Activated CD4-positive, alpha-beta T cell treated with anti-CD3 and anti-CD28 coated beads, Interleukin-2, amount 10 ng/mL, durations not matched to agents 24 days and 14 days (primary cell): ENCODE measurements at regions of chr1 and their contacts with region 1.

Region 1: GRCh38 chr1:192936313-192937018 is 122.7 kb downstream of the UCHL5 start:
- DNase-seq: no peak
- H3K4me3 Mint-ChIP-seq: peak overlapping the region; percentile 23
- H3K27ac Mint-ChIP-seq: peak overlapping the region; percentile 62
- H3K4me1 Mint-ChIP-seq: peaks cover 28% of the 10 kb centered on the region
- H3K27me3 Mint-ChIP-seq: no peaks in the 10 kb centered on the region

Region 2: GRCh38 chr1:192639607-192640368 is 296.7 kb before region 1 on chr1:
- intact Hi-C with region 1: loop called (anchors 10 kb)
- DNase-seq: no peak
- H3K4me3 Mint-ChIP-seq: no peak overlapping the region
- H3K27ac Mint-ChIP-seq: no peak overlapping the region
- H3K4me1 Mint-ChIP-seq: peaks cover 4% of the 10 kb centered on the region
- H3K27me3 Mint-ChIP-seq: peaks cover 4% of the 10 kb centered on the region

Region 3: DNA sequence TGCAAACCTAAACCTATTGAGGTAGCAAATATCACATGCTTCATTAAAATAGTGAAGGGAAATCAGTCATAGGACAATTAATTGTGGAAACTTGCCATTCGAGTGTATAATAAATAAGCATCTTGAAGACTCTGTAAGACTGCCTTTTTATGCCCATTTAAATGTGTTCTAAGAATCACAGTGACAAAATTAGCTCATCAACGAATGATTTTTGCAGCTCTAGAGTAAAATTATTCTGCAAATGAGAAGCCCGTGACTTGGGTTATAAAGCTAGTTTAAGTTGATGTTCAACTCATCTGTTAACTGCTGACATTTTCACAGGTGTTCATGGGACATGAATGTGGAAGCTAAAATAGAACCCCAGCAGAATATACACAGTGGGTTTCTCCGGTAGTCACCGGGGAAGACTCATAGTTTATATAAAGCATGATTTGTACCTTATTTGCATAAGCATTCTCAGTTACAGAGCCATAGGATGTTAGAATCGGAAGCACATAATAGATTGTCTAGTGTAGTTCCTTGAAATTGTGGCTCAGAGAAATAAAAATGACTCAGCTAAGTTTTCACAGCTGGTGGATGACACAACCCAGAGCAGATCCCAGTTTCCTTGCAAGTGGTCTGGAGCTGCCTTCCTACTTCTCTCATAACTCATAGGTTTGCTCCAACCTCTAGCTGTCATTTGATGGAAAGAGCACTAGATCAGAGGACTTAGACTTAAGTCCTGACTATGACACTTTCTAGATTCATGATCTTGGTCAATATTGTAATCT is 15.4 kb after region 1 on chr1:
- intact Hi-C with region 1: loop called (anchors 1 kb)
- DNase-seq: no peak
- H3K4me3 Mint-ChIP-seq: no peak overlapping the region
- H3K27ac Mint-ChIP-seq: no peak overlapping the region
- H3K4me1 Mint-ChIP-seq: peaks cover 2% of the 10 kb centered on the region
- H3K27me3 Mint-ChIP-seq: no peaks in the 10 kb centered on the region

Region 4: GRCh38 chr1:193019442-193020026 is 83.1 kb after region 1 on chr1:
- intact Hi-C with region 1: loop called (anchors 2 kb)
- DNase-seq: peak; percentile 69
- H3K4me3 Mint-ChIP-seq: no peak overlapping the region
- H3K27ac Mint-ChIP-seq: no peak overlapping the region
- H3K4me1 Mint-ChIP-seq: no peaks in the 10 kb centered on the region
- H3K27me3 Mint-ChIP-seq: no peaks in the 10 kb centered on the region

Region 5: GRCh38 chr1:193121616-193122593 is 185.4 kb after region 1 on chr1 and contains the start of gene CDC73:
- intact Hi-C with region 1: loop called (anchors 5 kb)
- DNase-seq: peak; percentile 99
- H3K4me3 Mint-ChIP-seq: peak within 1 kb of the TSS; percentile 100
- H3K27ac Mint-ChIP-seq: peak within 1 kb of the TSS; percentile 95
- H3K4me1 Mint-ChIP-seq: peaks cover 43% of the 10 kb centered on the region
- H3K27me3 Mint-ChIP-seq: peaks cover 10% of the 10 kb centered on the region
- total RNA-seq, gene CDC73: 55.2 and 56.0 TPM in 2 replicates